Posterior cingulate gyrus (tissue), 11 donors: ENCODE measurements at regions of chr20 and their contacts with region 1.

Region 1: GRCh38 chr20:2470423-2471193 is at the start of gene SNRPB:
- DNase-seq: peak; percentile 96 to 100 (median 98)

Region 2: DNA sequence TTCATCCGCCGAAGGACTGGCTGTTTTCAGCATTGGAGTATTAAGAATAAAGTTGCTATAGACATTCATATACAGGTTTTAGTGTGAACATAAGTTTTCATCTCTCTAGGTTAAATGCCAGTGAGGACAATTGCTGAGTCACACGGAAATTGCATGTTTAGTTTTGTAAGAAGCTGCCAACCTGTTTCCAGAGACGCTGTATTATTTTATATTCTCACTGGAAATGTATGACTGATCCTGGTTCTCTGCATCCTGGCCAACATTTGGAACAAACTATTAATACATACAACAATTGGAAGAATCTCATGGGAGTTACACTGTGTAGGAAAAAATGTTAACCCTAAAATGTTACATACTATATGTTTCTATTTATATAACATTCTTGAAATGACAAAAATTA is 106.6 kb before region 1 on chr20:
- intact Hi-C with region 1: no loop called
- DNase-seq: no peak

Region 3: DNA sequence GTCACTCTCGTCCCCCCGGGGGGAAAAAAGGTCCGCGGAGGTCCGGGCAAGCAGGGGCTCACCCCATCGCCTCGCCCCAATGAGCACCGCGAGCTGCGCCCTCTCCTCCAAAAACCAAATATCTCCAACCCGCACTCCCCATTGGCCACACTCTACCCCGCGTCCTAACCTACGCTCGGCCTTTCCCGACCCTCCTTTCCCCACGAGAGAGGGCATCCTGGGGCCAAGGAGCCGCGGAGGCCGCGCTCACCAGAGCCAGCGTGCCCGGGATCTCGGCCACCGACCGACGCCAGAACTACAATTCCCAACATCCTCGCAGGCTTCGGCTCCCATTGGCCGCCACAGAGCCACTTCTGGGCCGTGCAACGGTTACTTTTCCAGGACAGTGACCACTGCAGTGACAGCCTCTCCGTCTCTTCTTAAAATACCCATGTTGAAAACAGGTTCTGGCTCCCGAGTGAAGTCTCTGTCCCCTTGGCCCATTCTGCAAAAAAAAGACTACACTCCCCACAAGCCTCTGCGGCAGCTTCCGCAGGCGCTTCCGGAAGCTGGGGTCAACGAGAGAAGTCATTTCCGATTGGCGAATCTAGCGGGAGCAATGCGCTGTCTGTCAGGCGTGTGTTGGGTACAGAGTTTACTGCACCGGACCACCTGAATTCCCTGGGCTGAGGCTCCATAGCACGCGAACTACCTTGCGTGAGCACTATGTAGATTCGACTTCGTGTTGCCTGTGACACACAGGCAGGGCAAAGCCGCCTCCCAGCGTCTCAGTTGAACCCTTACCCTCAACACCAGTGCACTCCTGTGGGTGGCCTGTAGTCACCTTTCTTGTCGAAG is 38.2 kb after region 1 on chr20 and contains the start of gene ZNF343:
- intact Hi-C with region 1: loop called (anchors 2 kb)
- DNase-seq: peak; percentile 73 to 97 (median 80)

Region 4: DNA sequence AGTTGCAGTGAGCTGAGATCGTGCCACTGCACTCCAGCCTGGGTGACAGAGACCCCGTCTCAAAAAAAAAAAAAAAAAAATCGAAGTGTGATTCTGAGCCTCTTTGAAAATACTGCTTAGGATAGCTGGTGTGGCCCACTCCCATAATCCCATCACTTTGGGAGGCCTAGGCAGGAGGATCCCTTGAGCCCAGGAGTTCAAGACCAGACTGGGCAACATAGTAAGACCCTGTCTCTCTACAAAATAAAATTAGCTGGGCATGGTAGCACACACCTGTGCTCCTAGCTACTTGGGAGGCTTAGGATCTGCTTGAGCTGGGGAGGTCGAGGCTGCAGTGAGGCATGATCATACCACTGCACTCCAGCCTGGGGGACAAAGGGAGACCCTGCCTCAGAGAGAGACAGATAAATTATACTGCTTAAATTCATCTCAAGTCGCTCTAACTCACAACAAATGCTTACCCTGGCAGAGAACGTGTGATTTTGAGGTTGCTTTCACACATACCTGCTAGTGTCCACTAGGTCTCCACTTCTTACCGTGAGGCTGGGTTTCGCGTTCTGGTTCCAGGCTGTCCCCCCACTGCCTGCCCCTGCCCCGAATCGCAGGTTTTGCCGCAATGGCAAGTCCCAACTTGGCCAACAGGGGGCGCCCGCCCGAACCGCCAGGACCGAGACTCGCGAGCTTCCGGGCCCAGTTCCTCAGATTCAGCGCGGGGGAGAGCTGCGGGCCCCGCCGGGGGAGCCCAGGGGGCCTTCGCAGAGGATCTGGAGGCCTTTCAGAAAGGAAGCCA is 53.5 kb after region 1 on chr20:
- intact Hi-C with region 1: loop called (anchors 5 kb)
- DNase-seq: peak; percentile 82 to 98 (median 93)

Region 5: DNA sequence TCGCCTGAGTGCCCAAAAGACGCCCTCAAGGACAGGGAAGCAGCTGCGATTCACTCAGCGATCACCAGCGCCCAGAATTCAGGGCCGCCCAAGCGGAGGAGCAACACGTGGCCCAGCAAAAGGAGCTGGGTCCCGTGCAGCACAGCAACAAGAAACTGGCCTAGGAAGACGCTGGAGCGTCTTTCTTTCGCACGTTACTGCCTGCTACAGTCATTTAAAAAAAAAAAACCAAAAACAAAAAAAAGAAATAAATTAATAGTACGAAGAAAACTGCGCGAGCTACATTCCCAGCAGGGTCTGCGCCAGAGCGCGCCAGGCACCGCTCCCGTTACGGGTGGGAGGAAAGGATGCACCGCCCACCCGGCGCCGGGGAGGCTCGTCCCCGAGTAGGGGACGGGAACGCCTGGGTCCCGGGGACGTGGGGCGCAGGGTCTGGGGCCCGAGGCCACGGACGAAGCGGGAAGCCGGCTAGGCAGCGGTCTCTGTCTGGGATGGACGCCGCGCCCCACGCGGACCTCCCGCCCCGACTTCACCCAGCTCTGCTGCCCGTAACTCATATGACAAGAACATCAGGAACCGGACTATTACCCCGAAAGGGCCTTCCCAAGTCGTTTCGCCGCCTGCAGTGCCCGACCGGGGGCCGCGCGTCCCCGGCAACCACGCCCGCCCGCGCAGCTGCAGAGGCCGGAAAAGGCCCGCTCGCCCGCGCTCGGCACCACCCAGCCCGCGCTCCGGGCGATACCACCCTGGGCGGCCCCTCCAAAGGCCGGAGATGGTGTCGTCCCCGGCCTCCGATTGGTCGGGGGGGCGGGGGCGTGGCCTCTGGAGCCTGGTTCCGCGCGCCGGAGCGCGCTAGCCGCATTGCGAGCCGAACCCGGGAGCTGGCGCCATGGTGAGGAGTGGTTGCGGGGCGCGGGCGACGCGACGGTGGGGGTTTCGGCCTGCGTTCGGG is 181.4 kb after region 1 on chr20 and contains the start of gene NOP56:
- intact Hi-C with region 1: loop called (anchors 5 kb)
- DNase-seq: peak; percentile 87 to 99 (median 92)